GM13977 (cell line): ENCODE measurements at regions of chr1 and their contacts with region 1.

Region 1: DNA sequence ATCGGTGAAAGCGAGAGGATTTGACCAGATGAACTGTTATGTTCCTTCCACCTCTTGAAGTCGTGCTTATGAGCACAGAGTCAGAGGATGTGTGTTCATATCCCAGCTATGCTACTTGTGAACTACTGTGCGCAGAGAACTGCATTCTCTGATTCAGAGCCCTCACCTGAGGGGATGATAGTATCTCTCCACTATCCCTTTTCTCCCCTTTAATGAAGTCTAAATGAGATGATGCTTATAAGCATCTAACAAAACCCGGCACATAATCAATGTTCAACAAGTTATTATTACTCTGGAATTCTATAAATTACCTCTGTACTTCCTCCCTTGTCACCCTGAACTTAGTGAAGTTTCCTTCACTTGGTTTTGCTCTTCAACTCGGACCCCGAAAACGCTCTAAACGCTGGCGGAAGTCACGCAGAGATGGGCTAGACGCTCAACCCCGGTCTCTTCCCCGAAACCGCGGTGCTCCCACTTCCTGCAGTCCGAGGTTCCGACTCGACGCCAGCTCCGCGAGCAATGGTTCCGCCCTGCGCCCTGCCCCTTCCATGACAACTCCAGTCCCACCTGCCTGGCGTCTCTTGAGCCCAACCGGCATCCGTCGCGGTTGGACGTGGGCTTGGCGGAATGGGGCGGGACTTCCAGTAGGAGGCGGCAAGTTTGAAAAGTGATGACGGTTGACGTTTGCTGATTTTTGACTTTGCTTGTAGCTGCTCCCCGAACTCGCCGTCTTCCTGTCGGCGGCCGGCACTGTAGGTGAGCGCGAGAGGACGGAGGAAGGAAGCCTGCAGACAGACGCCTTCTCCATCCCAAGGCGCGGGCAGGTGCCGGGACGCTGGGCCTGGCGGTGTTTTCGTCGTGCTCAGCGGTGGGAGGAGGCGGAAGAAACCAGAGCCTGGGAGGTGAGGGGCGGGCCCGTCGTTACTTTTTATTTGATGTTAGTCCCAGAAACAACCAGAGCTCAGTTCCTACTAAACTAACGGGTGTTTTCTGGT is at the start of gene NUF2:
- DNase-seq: peak; percentile 88
- CTCF ChIP-seq: no peak

Region 2: DNA sequence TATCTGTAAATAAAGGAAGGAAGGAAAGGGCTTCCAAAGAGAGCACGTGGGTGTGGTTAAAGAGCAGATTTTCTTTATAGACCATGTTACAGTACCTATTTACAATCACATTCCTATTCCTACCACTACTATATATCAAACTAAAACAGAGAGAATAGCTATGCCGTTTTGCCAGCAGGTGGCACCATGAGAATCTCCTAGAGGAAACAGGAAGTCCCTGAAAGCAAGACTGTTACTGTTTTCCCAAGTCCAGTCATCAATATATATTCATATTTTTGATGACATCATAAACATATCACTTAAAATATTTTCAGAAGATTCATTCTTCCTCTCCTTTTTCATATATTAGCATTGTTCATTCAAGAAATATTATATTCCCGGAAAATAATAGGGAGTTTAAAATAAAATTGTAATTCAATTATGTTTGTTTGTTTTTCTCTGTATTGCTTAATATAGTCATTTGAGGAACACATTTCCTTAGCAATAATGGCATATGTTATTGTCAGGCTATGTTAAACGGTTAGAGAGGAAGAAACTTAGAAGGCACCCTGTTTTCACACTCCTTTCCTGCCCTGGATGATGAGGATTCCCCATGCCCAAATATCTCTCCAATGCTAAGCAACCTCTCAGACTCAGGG is 467.2 kb before region 1 on chr1:
- in situ Hi-C with region 1: loop called (anchors 25 kb)
- DNase-seq: peak; percentile 66
- CTCF ChIP-seq: peak; percentile 73

Region 3: DNA sequence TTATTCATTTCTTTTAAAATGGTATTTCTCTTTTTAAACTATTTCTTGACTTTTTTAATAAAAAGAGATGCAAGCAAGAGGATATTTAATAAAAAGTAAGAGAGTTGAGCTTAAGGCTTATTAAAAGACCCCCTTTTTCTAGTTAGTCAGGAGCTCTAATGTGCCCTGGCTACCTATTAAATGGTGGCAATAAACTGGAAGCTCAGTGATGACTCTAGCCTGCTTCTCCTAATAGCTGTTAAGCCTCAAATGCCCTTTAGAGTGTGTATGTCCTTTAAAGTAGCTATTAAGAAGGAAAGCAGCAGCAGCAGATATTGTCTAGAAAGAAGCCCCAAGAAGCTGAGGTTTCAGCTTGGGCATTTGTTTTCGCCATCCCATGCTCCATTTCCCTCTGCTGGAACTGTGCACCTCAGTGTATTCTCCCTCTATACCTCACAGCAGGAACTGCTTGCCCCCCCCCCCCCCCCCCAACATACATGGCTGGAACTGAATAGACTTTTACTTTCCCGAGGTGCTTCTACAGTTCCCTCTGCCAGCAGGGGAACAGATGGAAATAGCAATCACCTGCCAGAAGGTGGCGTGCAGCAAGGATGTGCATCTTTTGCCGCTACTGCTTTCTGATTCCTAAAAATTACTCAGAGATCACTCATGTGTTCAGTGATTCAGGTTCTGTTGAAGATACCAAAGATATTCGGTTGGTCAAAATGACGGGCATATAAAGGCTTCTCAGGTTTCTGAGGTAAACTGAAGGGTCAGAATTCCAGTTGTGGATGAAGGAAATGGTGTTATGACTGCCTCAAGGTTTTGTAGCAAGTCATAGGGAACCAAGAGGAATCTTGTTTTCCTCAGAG is 250.0 kb before region 1 on chr1:
- in situ Hi-C with region 1: loop called (anchors 25 kb)
- DNase-seq: peak; percentile 31
- CTCF ChIP-seq: peak; percentile 72

Region 4: GRCh38 chr1:163807061-163808049 is 485.7 kb after region 1 on chr1:
- in situ Hi-C with region 1: no loop called
- DNase-seq: no peak
- CTCF ChIP-seq: no peak